ENCODE measurements at regions of chr7 and their contacts with region 1.

Region 1: GRCh38 chr7:94449148-94449725 is 54.5 kb downstream of the COL1A2 start:
- DNase-seq: peak; percentile 32
- ATAC-seq: no peak
- H3K4me3 ChIP-seq: no peak overlapping the region
- H3K27ac ChIP-seq: no peak overlapping the region
- H3K4me1 ChIP-seq: no peaks in the 10 kb centered on the region
- H3K27me3 ChIP-seq: no peaks in the 10 kb centered on the region
- CTCF ChIP-seq: peak; percentile 46 to 79 (median 73); a peak in 5 of 6 replicates
- POLR2A ChIP-seq: no peak
- RAD21 ChIP-seq: peak; percentile 86

Region 2: DNA sequence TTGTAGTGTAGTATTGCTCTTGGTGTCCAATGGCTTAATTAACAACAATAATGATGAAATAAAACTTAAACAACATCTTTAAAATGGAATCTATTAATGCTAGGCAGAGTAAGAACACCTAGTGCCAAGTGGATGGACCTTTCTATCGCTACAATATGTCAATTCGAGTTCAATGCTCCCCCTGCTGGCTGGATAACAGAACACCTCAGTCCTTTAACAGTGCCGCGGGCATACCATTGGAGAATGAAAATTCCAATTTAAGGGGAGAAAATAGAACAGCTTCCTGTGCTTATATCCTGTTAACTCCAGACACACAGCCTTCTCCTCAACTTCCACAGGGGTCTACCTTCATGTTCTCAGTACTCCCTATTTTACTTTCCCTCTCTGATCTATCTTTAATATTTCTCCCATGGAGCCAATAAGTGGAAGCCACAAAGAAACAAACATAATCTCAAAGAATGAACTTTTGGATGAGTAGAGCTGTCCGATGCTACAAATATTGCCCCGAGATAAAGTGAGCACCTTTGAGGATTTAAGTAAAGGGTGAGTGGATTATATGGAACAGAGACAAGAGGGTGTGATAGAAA is 13.1 kb before region 1 on chr7:
- CTCF ChIA-PET with region 1: interaction called, 19 read pairs
- POLR2A ChIA-PET with region 1: no interaction called
- RAD21 ChIA-PET with region 1: no interaction called
- intact Hi-C with region 1: no loop called
- DNase-seq: peak; percentile 54
- ATAC-seq: peak; percentile 99
- H3K4me3 ChIP-seq: no peak overlapping the region
- H3K27ac ChIP-seq: no peak overlapping the region
- H3K4me1 ChIP-seq: 0 out of 4 replicates have a peak, but pooled peaks cover 0 to 3% of the 10 kb centered on the region in 2 experiments
- H3K27me3 ChIP-seq: no peaks in the 10 kb centered on the region
- CTCF ChIP-seq: peak; percentile 70 to 85 (median 78)
- POLR2A ChIP-seq: no peak
- RAD21 ChIP-seq: peak; percentile 70

Region 3: DNA sequence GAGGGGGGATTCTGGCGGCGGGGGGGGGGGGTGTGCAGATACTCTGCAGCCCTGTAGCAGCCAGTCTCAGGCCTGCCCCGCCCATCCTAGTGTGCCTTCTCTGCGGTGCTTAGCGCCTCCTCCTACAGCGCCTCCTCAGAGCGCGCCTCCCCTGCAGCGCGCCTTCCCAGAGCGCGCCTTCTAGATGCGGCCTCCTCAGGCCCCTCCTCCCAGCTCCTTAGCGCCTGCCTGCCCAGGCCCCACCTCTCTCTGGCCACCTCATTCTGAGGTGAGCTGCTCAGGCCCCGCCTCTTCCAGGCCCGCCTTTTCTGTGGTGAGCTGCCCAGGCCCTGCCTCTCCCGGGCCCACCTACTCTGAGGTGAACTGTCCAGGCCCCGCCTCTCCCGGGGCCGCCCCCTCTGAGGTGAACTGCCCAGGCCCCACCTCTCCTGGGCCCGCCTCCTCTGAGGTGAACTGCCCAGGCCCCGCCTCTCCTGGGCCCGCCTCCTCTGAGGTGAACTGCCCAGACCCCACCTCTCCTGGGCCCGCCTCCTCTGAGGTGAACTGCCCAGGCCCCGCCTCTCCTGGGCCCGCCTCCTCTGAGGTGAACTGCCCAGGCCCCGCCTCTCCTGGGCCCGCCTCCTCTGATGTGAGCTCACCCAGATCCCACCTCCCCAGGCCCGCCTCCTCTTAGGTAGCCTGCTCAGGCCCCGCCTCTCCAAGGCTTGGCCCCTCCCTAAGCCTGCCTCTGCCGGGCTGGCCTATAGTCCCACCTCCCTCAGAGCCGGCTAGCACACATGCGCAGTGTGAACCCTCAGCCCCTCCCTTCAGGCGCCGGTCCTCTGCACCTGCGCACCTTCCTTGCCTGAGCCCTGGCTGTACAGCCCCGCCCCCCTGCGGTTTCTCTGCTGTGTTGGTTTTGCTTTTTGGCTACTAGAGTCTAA is 208.8 kb after region 1 on chr7:
- CTCF ChIA-PET with region 1: interaction called, 11 read pairs
- POLR2A ChIA-PET with region 1: interaction called, 4 read pairs
- RAD21 ChIA-PET with region 1: interaction called, 3 read pairs
- intact Hi-C with region 1: loop called (anchors 10 kb)
- DNase-seq: peak; percentile 92
- ATAC-seq: peak; percentile 88
- H3K4me3 ChIP-seq: peak overlapping the region; percentile 46 to 56
- H3K27ac ChIP-seq: no peak overlapping the region
- H3K4me1 ChIP-seq: peaks cover 5 to 21% of the 10 kb centered on the region in 2 experiments; a peak in 2 of 4 replicates
- H3K27me3 ChIP-seq: no peaks in the 10 kb centered on the region
- CTCF ChIP-seq: no peak
- POLR2A ChIP-seq: no peak
- RAD21 ChIP-seq: no peak

Region 4: DNA sequence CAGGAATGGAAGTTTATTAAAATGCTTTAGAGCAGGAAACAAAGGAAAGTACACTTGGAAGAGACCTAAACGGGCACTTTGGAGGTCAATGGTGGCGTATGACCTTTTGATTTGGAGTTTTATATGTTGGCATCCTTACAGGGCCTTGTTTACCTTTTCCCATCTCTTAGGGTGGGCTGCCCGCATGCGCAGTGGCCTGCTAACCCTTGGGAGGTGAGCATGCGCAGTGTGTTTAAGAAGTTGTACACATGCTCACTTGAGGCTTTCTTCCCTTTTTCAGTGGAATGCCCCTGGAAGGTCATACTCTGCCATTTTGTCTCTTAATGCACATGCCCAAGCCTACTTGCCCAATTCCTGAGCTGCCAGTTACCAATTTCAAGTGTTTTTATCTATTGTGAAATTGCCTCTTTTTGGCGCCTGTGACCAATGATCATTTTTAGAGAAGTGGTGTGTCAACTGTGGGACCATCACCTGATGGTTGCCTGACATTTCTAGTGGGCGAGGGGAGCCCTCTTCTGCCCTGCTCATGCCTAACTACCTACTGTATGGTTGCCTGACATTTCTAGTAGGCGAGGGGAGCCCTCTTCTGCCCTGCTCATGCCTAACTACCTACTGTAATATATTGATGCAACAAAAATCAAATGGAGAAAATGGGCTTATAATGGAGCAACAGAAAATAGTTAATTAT is 596.1 kb after region 1 on chr7:
- CTCF ChIA-PET with region 1: interaction called, 3 read pairs
- POLR2A ChIA-PET with region 1: no interaction called
- RAD21 ChIA-PET with region 1: no interaction called
- intact Hi-C with region 1: loop called (anchors 10 kb)
- DNase-seq: no peak
- ATAC-seq: no peak; the same call in 1 of the 2 replicates
- H3K4me3 ChIP-seq: no peak overlapping the region
- H3K27ac ChIP-seq: no peak overlapping the region
- H3K4me1 ChIP-seq: no peaks in the 10 kb centered on the region
- H3K27me3 ChIP-seq: no peaks in the 10 kb centered on the region
- CTCF ChIP-seq: peak in 2 of 3 experiments; percentile 25 to 81; a peak in 3 of 6 replicates
- POLR2A ChIP-seq: no peak
- RAD21 ChIP-seq: peak; percentile 71

Region 5: GRCh38 chr7:95199779-95200558 is 750.7 kb after region 1 on chr7:
- CTCF ChIA-PET with region 1: interaction called, 17 read pairs
- POLR2A ChIA-PET with region 1: no interaction called
- RAD21 ChIA-PET with region 1: interaction called, 5 to 7 read pairs
- intact Hi-C with region 1: loop called (anchors 2 kb)
- DNase-seq: peak; percentile 24
- ATAC-seq: peak; percentile 83
- H3K4me3 ChIP-seq: no peak overlapping the region
- H3K27ac ChIP-seq: no peak overlapping the region
- H3K4me1 ChIP-seq: no peaks in the 10 kb centered on the region
- H3K27me3 ChIP-seq: no peaks in the 10 kb centered on the region
- CTCF ChIP-seq: peak; percentile 48 to 76 (median 75); a peak in 5 of 6 replicates
- POLR2A ChIP-seq: no peak
- RAD21 ChIP-seq: peak; percentile 79

Region 6: GRCh38 chr7:95246831-95247370 is 797.7 kb after region 1 on chr7:
- CTCF ChIA-PET with region 1: interaction called, 12 read pairs
- POLR2A ChIA-PET with region 1: no interaction called
- RAD21 ChIA-PET with region 1: interaction called, 3 to 8 read pairs
- intact Hi-C with region 1: loop called (anchors 5 kb)
- DNase-seq: peak; percentile 54
- ATAC-seq: peak; percentile 86
- H3K4me3 ChIP-seq: no peak overlapping the region
- H3K27ac ChIP-seq: no peak overlapping the region
- H3K4me1 ChIP-seq: no peaks in the 10 kb centered on the region; a peak in 1 of 4 replicates
- H3K27me3 ChIP-seq: no peaks in the 10 kb centered on the region
- CTCF ChIP-seq: peak; percentile 44 to 77 (median 62); a peak in 5 of 6 replicates
- POLR2A ChIP-seq: no peak
- RAD21 ChIP-seq: peak; percentile 81

Region 7: DNA sequence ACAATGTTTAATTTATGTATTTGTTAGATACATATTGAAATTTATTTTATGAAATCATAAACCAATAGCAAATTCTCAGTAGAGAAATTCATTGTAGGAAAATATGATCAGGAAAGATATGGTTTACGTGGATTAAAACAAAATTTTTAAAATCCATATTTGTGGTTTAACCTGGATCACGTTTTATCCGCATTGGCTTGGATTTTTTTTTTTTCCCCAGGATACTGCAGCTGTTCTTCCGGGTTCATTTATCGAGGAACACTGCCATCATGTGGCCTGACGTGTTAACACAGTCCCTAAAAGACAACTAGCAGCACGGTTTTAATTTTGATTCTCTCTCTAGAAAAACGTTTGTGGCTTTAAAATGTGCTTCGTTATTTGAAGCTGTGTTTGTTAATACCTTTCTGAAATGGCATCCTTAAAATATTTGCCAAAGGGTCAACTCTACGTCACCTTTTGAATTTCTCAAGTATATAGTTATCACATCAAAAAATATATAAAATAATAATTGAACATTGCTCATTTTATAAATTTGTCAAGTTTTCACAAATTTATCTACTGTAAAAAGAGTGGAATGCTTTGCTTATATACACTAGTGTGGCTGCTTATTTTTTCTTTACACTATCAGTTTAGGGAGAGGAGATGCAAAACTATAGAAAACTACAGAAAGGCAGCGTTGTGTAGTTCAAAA is 1027.8 kb after region 1 on chr7:
- CTCF ChIA-PET with region 1: interaction called, 8 read pairs
- POLR2A ChIA-PET with region 1: no interaction called
- RAD21 ChIA-PET with region 1: interaction called in 1 of 2 experiments, 4 read pairs
- intact Hi-C with region 1: loop called (anchors 5 kb)
- DNase-seq: peak; percentile 62
- ATAC-seq: peak; percentile 72
- H3K4me3 ChIP-seq: no peak overlapping the region
- H3K27ac ChIP-seq: no peak overlapping the region
- H3K4me1 ChIP-seq: peaks cover 0 to 6% of the 10 kb centered on the region in 2 experiments; a peak in 1 of 4 replicates
- H3K27me3 ChIP-seq: no peaks in the 10 kb centered on the region
- CTCF ChIP-seq: peak; percentile 58 to 80 (median 62); a peak in 5 of 6 replicates
- POLR2A ChIP-seq: no peak
- RAD21 ChIP-seq: peak; percentile 82

Measured in HCT116 (cell line).